ENCODE measurements at regions of chr13 and their contacts with region 1.

Region 1: GRCh38 chr13:99916366-99917103 is 55.0 kb downstream of the ZIC5 start:
- DNase-seq: peak; percentile 71 to 82
- ATAC-seq: peak; percentile 93 to 97
- H3K4me3 ChIP-seq: no peak overlapping the region
- H3K27ac ChIP-seq: no peak overlapping the region
- H3K4me1 ChIP-seq: no peaks in the 10 kb centered on the region
- CTCF ChIP-seq: peak; percentile 94
- EP300 ChIP-seq: no peak
- POLR2A ChIP-seq: no peak
- RAD21 ChIP-seq: peak; percentile 78 to 86

Region 2: DNA sequence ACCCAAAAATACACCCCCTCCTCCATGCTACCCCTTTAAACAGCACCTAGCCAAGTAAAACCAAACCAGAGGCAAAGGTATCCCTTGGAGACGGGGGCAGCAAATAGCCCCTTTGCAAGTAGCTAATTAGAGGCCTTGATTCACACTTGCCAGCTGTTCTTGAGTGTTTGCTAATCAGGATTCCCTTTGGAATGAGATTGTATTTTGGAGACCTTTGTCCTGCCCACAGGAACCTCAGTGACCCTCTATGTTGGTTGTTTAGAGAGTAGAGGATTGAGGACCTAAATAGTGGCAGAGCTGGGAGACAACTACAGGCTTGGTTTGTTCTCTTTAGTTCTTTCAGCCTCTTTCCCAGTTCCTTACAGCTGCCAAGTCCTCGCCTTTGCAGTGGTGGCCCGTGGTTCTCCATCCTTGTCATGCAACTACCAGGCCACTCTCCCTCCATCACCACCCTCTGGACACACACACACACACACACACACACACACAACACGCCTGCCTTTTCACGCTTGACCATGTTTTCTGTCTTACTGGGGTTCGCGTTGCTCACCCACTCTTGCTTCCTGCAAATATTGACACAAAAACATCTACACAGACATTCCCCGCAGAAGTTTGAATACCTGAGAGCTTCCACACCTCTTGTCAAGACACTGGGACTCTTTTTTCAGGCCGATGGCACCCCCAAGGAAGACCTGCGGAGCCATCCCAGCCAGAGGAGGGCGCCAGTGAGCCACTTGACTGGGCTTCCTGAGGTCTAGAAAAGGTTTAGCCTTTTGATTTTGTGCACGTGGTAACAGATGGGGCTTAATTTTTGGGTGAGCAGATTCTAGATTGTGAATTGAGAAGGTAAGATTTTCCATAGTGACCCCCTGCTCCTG is 529.4 kb before region 1 on chr13:
- CTCF ChIA-PET with region 1: no interaction called
- POLR2A ChIA-PET with region 1: no interaction called
- DNase-seq: peak; percentile 29 to 30
- ATAC-seq: peak in 1 of 2 experiments; percentile 71; a peak in 3 of 6 replicates
- H3K4me3 ChIP-seq: no peak overlapping the region
- H3K27ac ChIP-seq: no peak overlapping the region
- H3K4me1 ChIP-seq: no peaks in the 10 kb centered on the region
- CTCF ChIP-seq: peak; percentile 36
- EP300 ChIP-seq: no peak
- POLR2A ChIP-seq: no peak
- RAD21 ChIP-seq: peak in 1 of 2 experiments; percentile 52; a peak in 2 of 5 replicates

Region 3: GRCh38 chr13:99900960-99901359 is 15.6 kb before region 1 on chr13:
- CTCF ChIA-PET with region 1: interaction called, 19 read pairs
- POLR2A ChIA-PET with region 1: no interaction called
- DNase-seq: no peak
- ATAC-seq: peak in 1 of 2 experiments; percentile 29; a peak in 3 of 6 replicates
- H3K4me3 ChIP-seq: no peak overlapping the region
- H3K27ac ChIP-seq: no peak overlapping the region
- H3K4me1 ChIP-seq: no peaks in the 10 kb centered on the region
- CTCF ChIP-seq: no peak
- EP300 ChIP-seq: no peak
- POLR2A ChIP-seq: no peak
- RAD21 ChIP-seq: no peak

Region 4: GRCh38 chr13:100100115-100100879 is 183.8 kb after region 1 on chr13:
- CTCF ChIA-PET with region 1: no interaction called
- POLR2A ChIA-PET with region 1: no interaction called
- DNase-seq: peak; percentile 19 to 31
- ATAC-seq: peak; percentile 39 to 40; a peak in 3 of 6 replicates
- H3K4me3 ChIP-seq: no peak overlapping the region
- H3K27ac ChIP-seq: peak overlapping the region; percentile 60
- H3K4me1 ChIP-seq: peaks cover 30% of the 10 kb centered on the region
- CTCF ChIP-seq: no peak
- EP300 ChIP-seq: no peak
- POLR2A ChIP-seq: no peak
- RAD21 ChIP-seq: no peak

Region 5: DNA sequence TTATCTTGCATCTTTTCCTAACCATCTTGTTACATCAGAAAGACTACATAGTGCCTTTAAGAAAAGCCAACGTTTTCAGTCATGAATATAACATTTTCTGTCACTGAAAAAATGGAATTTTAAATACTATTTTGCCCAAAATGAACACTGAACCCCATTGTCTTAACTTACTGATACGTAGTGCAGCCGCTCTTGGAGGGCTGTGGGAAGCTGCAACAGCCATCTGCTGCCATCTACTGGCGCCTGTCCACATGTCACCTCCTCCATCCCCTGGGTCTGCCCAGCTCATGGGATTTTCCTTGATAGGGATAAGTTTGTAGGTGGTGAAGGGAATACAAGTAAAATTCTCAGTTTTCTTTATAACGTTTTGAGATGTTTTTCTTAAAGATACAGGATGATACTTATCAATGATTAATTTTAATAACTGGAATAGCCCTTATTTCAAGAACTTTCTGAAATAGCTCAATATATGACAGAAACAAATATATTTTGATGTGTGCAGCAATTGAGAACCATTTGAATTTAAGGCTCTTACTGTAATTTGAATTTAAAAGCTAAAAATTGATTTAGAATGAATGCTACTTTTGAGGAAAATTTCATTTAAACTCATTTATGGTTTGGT is 598.4 kb after region 1 on chr13:
- CTCF ChIA-PET with region 1: interaction called, 15 read pairs
- POLR2A ChIA-PET with region 1: no interaction called
- DNase-seq: peak; percentile 67 to 89
- ATAC-seq: peak; percentile 97 to 98
- H3K4me3 ChIP-seq: no peak overlapping the region
- H3K27ac ChIP-seq: peak overlapping the region; percentile 35 to 56; a peak in 4 of 6 replicates
- H3K4me1 ChIP-seq: peaks cover 43% of the 10 kb centered on the region
- CTCF ChIP-seq: peak; percentile 84
- EP300 ChIP-seq: no peak
- POLR2A ChIP-seq: no peak
- RAD21 ChIP-seq: peak; percentile 93 to 95

Measured in A549 (cell line).